Panc1 (cell line): ENCODE measurements at regions of chr6 and their contacts with region 1.

Region 1: DNA sequence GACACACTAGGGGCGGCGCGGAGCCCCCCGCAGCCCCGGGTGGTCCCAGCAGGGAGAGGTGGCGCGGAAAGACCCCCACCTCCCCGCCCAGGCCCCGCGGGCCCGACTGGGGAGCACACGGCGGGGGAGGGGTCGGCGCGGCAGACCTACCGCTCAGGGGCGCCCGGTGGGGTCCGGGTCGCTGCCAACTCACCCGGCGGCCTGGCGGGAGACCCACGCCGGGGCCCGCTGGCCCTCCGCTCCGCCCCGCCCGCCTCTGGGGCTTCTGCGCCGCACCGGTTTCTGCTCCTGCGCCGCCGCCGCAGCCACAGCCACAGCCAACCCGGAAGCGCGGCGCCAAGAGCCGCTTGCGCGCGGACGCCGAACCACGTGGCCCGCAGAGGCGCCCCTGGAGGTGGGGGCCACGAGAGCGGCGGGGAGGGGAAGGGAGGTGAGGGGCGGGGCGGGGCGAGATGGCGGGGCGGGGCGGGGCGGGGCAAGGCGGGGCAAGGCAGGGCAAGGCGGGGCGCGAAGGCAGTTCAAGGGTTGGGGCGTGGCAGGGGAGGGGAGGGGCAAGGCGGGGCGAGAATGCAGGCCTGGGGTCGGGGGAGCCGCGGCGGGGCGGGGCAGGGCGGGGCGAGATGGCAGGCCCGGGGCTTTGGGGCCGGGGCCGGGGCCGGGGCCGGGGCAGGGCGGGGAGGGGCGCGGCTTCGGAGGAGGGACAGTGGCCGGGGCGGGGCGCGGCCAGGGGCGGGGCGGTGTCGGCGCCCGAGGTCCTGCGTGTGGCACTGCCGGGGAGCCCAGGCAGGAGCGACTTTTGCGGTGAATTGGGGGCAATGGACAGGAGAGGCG is at the start of gene ZBTB24:
- DNase-seq: no peak
- ATAC-seq: peak; percentile 95
- H3K4me3 ChIP-seq: peak within 1 kb of the TSS; percentile 88 to 91
- H3K27ac ChIP-seq: peak within 1 kb of the TSS; percentile 95
- H3K4me1 ChIP-seq: peaks cover 35% of the 10 kb centered on the region
- H3K27me3 ChIP-seq: no peaks in the 10 kb centered on the region; the same call in 1 of the 2 replicates
- CTCF ChIP-seq: no peak
- total RNA-seq, gene ZBTB24: 21.5 TPM

Region 2: GRCh38 chr6:109095027-109095834 is 387.9 kb before region 1 on chr6 and contains the start of gene CEP57L1:
- CTCF ChIA-PET with region 1: no interaction called
- POLR2A ChIA-PET with region 1: interaction called, 10 read pairs
- in situ Hi-C with region 1: no loop called
- intact Hi-C with region 1: no loop called
- DNase-seq: peak; percentile 98
- ATAC-seq: peak; percentile 85
- H3K4me3 ChIP-seq: peak within 1 kb of the TSS; percentile 64 to 89
- H3K27ac ChIP-seq: peak within 1 kb of the TSS; percentile 96
- H3K4me1 ChIP-seq: peaks cover 18% of the 10 kb centered on the region
- H3K27me3 ChIP-seq: no peaks in the 10 kb centered on the region
- CTCF ChIP-seq: no peak; the same call in 1 of the 2 replicates
- total RNA-seq, gene CEP57L1: 37.6 TPM

Region 3: DNA sequence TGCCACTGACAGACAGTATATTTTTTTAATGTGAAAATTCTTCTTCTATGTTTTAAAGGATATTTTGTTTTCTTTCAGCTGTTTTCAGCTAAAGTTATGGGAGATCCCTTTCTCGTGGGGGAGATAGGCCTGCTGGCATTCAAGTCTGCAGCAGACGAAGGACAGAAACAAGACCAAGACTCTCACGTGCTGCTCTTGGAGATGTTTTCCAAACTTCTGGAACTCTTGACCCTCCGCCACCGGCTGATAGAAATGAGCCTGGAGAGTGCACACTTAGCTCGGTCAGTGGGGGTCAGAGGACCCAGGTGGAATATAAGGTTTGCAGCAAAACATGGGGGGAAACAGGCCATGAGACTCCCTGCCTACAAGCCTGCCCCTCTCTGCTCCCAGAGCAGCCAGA is 221.3 kb before region 1 on chr6:
- CTCF ChIA-PET with region 1: no interaction called
- POLR2A ChIA-PET with region 1: no interaction called
- in situ Hi-C with region 1: no loop called
- intact Hi-C with region 1: no loop called
- DNase-seq: no peak
- ATAC-seq: no peak
- H3K4me3 ChIP-seq: no peak overlapping the region
- H3K27ac ChIP-seq: no peak overlapping the region
- H3K4me1 ChIP-seq: no peaks in the 10 kb centered on the region
- H3K27me3 ChIP-seq: no peaks in the 10 kb centered on the region; the same call in 1 of the 2 replicates
- CTCF ChIP-seq: no peak

Region 4: GRCh38 chr6:109455502-109456282 is 27.4 kb before region 1 on chr6 and contains the start of gene MICAL1:
- CTCF ChIA-PET with region 1: no interaction called
- POLR2A ChIA-PET with region 1: interaction called, 11 read pairs
- in situ Hi-C with region 1: no loop called
- intact Hi-C with region 1: no loop called
- DNase-seq: no peak
- ATAC-seq: peak; percentile 87
- H3K4me3 ChIP-seq: peak within 1 kb of the TSS; percentile 74 to 91
- H3K27ac ChIP-seq: peak within 1 kb of the TSS; percentile 90
- H3K4me1 ChIP-seq: peaks cover 22% of the 10 kb centered on the region
- H3K27me3 ChIP-seq: no peaks in the 10 kb centered on the region
- CTCF ChIP-seq: no peak
- total RNA-seq, gene MICAL1: 64.5 TPM

Region 5: GRCh38 chr6:110981202-110981600 is 1498.1 kb after region 1 on chr6:
- CTCF ChIA-PET with region 1: no interaction called
- POLR2A ChIA-PET with region 1: interaction called, 14 read pairs
- in situ Hi-C with region 1: no loop called
- intact Hi-C with region 1: no loop called
- DNase-seq: no peak
- ATAC-seq: 0 out of 2 replicates have a peak, but pooled peaks have one; percentile 1
- H3K4me3 ChIP-seq: peak overlapping the region; percentile 73 to 81
- H3K27ac ChIP-seq: peak overlapping the region; percentile 96
- H3K4me1 ChIP-seq: peaks cover 4% of the 10 kb centered on the region; the same call in 1 of the 2 replicates
- H3K27me3 ChIP-seq: no peaks in the 10 kb centered on the region
- CTCF ChIP-seq: no peak